ENCODE measurements at regions of chr5 and their contacts with region 1.

Region 1: DNA sequence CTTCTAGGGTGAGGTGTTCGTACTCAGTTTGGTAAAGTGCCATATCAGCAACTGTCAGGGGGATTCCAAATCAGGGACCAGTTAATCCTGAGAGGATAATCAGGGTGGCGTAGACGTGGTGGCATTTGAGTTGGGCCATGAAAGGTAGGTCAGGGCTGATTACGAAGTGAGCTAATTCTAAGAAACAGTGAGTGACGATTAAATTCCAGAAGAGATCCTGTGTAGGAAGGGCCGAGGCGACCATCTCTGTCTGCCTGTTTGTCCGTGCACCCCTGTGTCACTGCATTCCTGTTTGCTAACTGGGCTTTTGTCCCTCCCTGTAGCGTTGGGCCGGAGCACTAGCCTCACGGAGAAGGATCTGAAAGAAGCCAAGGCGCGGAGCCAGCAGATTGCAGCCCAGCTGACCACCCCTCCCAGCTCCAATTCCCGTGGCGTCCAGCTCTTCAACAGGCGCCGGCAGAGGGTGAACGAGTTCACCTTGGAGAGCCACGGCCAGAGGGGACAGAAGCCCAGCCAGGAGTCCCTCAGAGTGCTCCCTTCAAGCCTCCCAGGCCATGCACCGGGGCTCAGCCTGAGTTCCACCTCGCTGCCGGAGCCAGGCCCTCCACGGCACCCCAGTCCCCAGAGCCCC is 7.3 kb downstream of the SYNPO start:
- DNase-seq: peak; percentile 81 to 86 (median 84)
- H3K4me3 ChIP-seq: no peak overlapping the region
- H3K27ac ChIP-seq: no peak overlapping the region
- H3K4me1 ChIP-seq: peaks cover 41% of the 10 kb centered on the region
- H3K27me3 ChIP-seq: no peaks in the 10 kb centered on the region
- CTCF ChIP-seq: no peak
- EP300 ChIP-seq: no peak
- POLR2A ChIP-seq: no peak

Region 2: GRCh38 chr5:150560401-150561193 is 87.1 kb before region 1 on chr5:
- intact Hi-C with region 1: loop called in 1 of 4 experiments (anchors 2 kb)
- DNase-seq: peak; percentile 64 to 95 (median 83)
- H3K4me3 ChIP-seq: no peak overlapping the region
- H3K27ac ChIP-seq: no peak overlapping the region
- H3K4me1 ChIP-seq: no peaks in the 10 kb centered on the region
- H3K27me3 ChIP-seq: no peaks in the 10 kb centered on the region
- CTCF ChIP-seq: peak; percentile 86 to 94 (median 90)
- EP300 ChIP-seq: no peak
- POLR2A ChIP-seq: no peak

Region 3: DNA sequence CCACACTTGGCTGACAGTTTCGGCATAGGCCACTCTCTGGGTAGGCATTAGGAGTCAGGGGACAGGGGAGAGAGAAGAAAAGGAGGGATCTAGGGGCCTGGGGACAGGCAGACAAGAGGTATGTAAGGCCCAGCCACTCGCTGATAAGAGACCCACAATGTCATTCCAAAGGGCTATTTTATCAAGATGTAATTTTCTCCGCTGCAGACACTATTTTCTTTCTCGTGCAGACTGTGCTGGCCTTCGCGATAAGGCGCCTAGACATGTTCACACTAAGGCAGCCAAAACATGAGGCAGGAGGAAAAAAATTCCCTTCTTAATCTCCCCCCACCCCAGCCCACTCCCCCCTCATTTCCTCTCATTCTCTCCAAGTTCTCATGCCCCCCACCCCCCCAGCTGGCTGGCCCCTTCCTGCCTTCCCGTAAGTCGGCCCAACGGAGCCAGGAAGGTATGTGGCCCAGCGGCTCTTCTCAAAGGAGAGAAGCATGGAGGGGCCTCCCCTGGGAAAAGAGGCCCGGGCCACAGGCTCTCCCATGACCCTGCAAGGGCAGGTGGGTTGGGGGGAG is 52.2 kb before region 1 on chr5:
- intact Hi-C with region 1: loop called in 3 of 4 experiments (anchors 2 to 5 kb)
- DNase-seq: peak in 3 of 5 donors; percentile 47 to 72 (median 71)
- H3K4me3 ChIP-seq: no peak overlapping the region
- H3K27ac ChIP-seq: peak overlapping the region in 1 of 2 donors; percentile 18
- H3K4me1 ChIP-seq: peaks cover 28% of the 10 kb centered on the region
- H3K27me3 ChIP-seq: no peaks in the 10 kb centered on the region
- CTCF ChIP-seq: no peak
- EP300 ChIP-seq: no peak
- POLR2A ChIP-seq: no peak

Region 4: GRCh38 chr5:151315998-151316597 is 668.4 kb after region 1 on chr5:
- intact Hi-C with region 1: no loop called
- DNase-seq: peak; percentile 50 to 81 (median 71)
- H3K4me3 ChIP-seq: no peak overlapping the region
- H3K27ac ChIP-seq: no peak overlapping the region
- H3K4me1 ChIP-seq: peaks cover 5% of the 10 kb centered on the region
- H3K27me3 ChIP-seq: no peaks in the 10 kb centered on the region
- CTCF ChIP-seq: peak; percentile 23 to 42 (median 33)
- EP300 ChIP-seq: no peak
- POLR2A ChIP-seq: no peak

Measured in ovary (tissue), 10 donors.